ENCODE measurements at regions of chr12 and their contacts with region 1.

Region 1: DNA sequence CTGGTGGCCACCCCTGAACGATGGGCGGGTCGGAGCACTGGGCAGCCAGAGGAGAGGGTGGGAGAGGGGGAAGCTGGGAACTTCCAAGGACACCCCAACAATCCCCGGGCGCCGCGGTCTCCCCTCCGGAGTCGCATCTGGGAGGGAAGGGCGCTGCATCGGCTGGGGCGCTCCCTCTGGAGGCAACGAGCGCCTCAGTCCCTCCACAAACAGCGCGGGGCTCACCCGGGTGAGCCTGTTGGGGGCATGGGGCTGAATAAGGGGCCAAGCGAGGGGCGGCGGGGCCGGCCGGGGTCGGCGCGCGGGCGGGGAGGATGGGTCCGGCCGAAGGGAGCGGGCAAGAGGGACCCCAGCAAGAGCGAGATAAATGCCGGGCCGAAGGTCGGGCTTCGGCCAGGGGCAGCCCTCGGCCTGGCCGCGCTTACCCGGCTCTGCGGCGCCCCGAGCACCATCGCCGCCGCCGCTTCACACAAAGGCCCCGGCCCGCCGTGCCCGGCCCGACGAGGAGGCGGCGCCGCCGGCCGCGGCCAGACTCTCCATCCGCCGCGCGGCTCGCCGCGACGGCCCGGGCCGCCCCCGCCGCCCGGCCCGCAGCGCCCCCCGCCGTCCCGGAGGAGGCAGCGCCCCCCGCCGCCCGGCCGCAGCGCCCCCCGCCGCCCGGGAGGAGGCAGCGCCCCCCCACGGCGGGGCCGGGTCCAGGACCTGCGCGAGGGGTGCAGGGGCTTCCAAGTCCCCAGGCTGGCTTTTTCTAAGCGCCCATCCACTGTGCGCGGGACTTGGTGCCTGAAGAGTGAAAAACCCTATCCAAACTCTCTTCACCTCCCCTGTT is at the start of gene ZBTB39:
- DNase-seq: no peak
- ATAC-seq: peak; percentile 82
- H3K4me3 ChIP-seq: peak within 1 kb of the TSS; percentile 93
- H3K27ac ChIP-seq: peak within 1 kb of the TSS; percentile 28; the same call in 1 of the 2 replicates
- H3K4me1 ChIP-seq: peaks cover 10% of the 10 kb centered on the region
- H3K27me3 ChIP-seq: no peaks in the 10 kb centered on the region
- CTCF ChIP-seq: peak; percentile 48 to 61 (median 58)
- EP300 ChIP-seq: no peak
- POLR2A ChIP-seq: peak; percentile 79
- RAD21 ChIP-seq: peak; percentile 26; the same call in 1 of the 2 replicates
- polyA plus RNA-seq, gene ZBTB39: 0.88 to 0.93 TPM

Region 2: DNA sequence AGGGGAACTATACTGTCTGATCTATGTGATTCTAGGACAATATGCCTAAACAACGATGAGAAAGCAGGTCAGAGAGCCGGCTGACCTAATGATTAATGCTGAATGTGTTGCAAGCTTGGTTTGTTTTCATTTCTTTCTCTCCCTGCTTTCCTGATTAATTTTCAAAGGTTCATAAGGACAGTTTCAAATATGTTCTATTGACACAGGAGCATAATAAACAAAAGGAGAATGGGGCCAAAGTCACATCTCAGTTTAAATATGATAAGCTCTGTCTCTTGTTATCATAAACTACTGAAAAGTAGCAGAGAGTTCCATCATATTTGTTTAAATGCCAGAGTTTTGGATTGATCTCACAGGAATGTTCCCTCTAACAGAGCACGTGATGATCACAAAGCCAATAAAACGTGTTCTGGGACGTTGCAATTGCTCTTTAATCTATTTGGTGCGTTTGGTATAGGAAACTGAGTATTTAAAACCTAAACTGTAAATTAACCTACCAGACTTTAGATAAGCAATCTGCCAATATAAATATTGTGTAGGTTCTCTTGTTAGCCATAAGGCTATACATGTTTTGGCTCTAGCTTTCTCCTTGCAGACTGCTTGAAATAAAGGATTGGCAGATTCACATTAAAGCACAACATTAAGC is 246.8 kb before region 1 on chr12:
- CTCF ChIA-PET with region 1: interaction called, 177 read pairs
- POLR2A ChIA-PET with region 1: interaction called, 3 read pairs
- RAD21 ChIA-PET with region 1: interaction called, 18 read pairs
- SMC1A ChIA-PET with region 1: interaction called, 125 read pairs
- in situ Hi-C with region 1: loop called (anchors 5 kb)
- intact Hi-C with region 1: loop called (anchors 1 kb)
- DNase-seq: no peak
- ATAC-seq: no peak
- H3K4me3 ChIP-seq: no peak overlapping the region
- H3K27ac ChIP-seq: no peak overlapping the region
- H3K4me1 ChIP-seq: no peaks in the 10 kb centered on the region
- H3K27me3 ChIP-seq: no peaks in the 10 kb centered on the region
- CTCF ChIP-seq: no peak
- EP300 ChIP-seq: no peak
- POLR2A ChIP-seq: no peak
- RAD21 ChIP-seq: no peak

Region 3: GRCh38 chr12:56839915-56840325 is 166.3 kb before region 1 on chr12:
- CTCF ChIA-PET with region 1: interaction called, 35 read pairs
- POLR2A ChIA-PET with region 1: interaction called, 3 read pairs
- RAD21 ChIA-PET with region 1: interaction called, 12 read pairs
- SMC1A ChIA-PET with region 1: interaction called, 10 read pairs
- in situ Hi-C with region 1: no loop called
- intact Hi-C with region 1: loop called (anchors 1 kb)
- DNase-seq: peak; percentile 2
- ATAC-seq: peak; percentile 77
- H3K4me3 ChIP-seq: no peak overlapping the region
- H3K27ac ChIP-seq: no peak overlapping the region
- H3K4me1 ChIP-seq: no peaks in the 10 kb centered on the region
- H3K27me3 ChIP-seq: no peaks in the 10 kb centered on the region
- CTCF ChIP-seq: peak; percentile 71 to 75 (median 74)
- EP300 ChIP-seq: no peak
- POLR2A ChIP-seq: no peak
- RAD21 ChIP-seq: peak; percentile 86

Region 4: DNA sequence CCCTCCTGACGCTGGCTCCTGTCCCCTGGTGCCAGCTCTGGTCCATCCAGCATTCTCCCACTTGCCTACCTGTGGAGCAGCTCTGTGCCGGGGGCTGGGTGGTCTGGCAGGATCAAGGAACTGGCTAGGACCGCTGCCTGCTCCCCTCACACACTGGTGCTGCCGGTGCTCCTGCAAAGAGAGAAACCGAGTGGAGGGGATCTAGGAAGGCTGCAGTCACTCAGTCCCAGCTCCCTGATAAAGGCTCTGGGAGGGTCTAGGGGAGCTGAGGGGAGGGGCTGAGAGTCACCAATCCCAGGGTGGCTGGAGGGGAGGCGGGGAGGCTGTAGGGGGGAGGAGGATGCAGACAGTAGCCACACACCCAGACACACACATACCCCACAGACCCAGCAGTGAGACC is 10.1 kb after region 1 on chr12 and contains the start of gene TAC3:
- CTCF ChIA-PET with region 1: interaction called, 10 read pairs
- POLR2A ChIA-PET with region 1: no interaction called
- RAD21 ChIA-PET with region 1: interaction called, 4 read pairs
- SMC1A ChIA-PET with region 1: interaction called, 5 read pairs
- in situ Hi-C with region 1: no loop called
- intact Hi-C with region 1: no loop called
- DNase-seq: no peak
- ATAC-seq: no peak
- H3K4me3 ChIP-seq: no peak within 1 kb of the TSS
- H3K27ac ChIP-seq: no peak within 1 kb of the TSS
- H3K4me1 ChIP-seq: peaks cover 19% of the 10 kb centered on the region
- H3K27me3 ChIP-seq: no peaks in the 10 kb centered on the region
- CTCF ChIP-seq: no peak
- EP300 ChIP-seq: no peak
- POLR2A ChIP-seq: no peak
- RAD21 ChIP-seq: no peak
- polyA plus RNA-seq, gene TAC3: 0.13 to 0.18 TPM

Region 5: DNA sequence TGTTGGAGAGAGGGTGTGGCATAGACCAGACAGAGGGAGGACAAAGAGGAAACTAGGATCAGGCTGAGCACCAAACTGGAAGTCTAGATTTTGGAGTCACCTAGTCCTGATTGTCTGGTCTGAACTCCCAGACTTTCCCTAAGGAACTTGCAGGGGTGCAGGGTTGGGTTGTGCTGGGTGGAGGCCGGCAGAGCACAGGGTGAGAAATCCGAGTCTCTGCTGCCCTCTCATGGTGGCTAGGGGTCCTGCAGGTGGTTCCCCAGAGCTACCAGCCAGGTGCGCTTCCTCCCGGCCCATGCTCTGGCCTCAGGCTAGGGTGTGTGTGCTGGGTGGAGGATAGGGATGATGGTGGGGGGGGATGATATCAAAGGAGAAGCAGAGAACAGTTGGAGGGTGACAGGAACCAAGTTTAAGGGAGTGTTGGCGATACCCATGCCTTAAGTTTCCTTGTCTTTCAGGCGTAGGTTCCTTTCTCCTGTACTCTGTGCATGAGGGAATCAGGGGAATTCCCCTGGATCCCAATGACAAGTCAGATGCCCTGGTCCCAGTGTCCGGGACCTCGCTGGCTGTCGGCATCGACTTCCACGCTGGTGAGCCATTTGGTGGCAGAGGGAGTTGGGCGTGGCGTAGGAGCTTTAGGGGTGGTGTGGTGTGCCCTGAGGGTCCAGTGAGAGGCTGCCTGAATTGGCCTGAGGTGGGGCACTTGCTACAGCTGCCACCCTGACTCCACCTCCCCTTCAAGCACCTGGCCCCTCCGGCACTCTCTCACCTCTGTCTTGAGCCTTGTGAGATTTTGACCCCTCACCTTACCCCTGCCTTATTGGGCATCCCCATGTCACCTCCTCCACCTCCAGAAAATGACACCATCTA is 177.0 kb after region 1 on chr12:
- CTCF ChIA-PET with region 1: interaction called, 3 read pairs
- POLR2A ChIA-PET with region 1: no interaction called
- RAD21 ChIA-PET with region 1: interaction called, 3 read pairs
- SMC1A ChIA-PET with region 1: no interaction called
- in situ Hi-C with region 1: no loop called
- intact Hi-C with region 1: loop called (anchors 2 kb)
- DNase-seq: peak; percentile 15
- ATAC-seq: peak; percentile 98
- H3K4me3 ChIP-seq: no peak overlapping the region
- H3K27ac ChIP-seq: no peak overlapping the region
- H3K4me1 ChIP-seq: no peaks in the 10 kb centered on the region
- H3K27me3 ChIP-seq: no peaks in the 10 kb centered on the region; a peak in 2 of 4 replicates
- CTCF ChIP-seq: peak; percentile 96 to 98 (median 97)
- EP300 ChIP-seq: no peak
- POLR2A ChIP-seq: no peak
- RAD21 ChIP-seq: peak; percentile 89